B cell (primary cell): ENCODE measurements at regions of chr2 and their contacts with region 1.

Region 1: GRCh38 chr2:201182650-201183364 is at the start of gene CASP10:
- DNase-seq: peak; percentile 85
- ATAC-seq: peak; percentile 84
- H3K4me3 ChIP-seq: peak within 1 kb of the TSS; percentile 64 to 96 (median 79)
- H3K4me3 Mint-ChIP-seq: peak within 1 kb of the TSS; percentile 96
- H3K27ac ChIP-seq: peak within 1 kb of the TSS; percentile 33 to 71
- H3K27ac Mint-ChIP-seq: peak within 1 kb of the TSS; percentile 86
- H3K4me1 ChIP-seq: peaks cover 30 to 37% of the 10 kb centered on the region in 2 donors
- H3K4me1 Mint-ChIP-seq: peaks cover 46% of the 10 kb centered on the region
- H3K27me3 ChIP-seq: no peaks in the 10 kb centered on the region
- H3K27me3 Mint-ChIP-seq: no peaks in the 10 kb centered on the region
- CTCF ChIP-seq: peak; percentile 71
- total RNA-seq, gene CASP10: 33.7 and 34.3 TPM in 2 replicates

Region 2: DNA sequence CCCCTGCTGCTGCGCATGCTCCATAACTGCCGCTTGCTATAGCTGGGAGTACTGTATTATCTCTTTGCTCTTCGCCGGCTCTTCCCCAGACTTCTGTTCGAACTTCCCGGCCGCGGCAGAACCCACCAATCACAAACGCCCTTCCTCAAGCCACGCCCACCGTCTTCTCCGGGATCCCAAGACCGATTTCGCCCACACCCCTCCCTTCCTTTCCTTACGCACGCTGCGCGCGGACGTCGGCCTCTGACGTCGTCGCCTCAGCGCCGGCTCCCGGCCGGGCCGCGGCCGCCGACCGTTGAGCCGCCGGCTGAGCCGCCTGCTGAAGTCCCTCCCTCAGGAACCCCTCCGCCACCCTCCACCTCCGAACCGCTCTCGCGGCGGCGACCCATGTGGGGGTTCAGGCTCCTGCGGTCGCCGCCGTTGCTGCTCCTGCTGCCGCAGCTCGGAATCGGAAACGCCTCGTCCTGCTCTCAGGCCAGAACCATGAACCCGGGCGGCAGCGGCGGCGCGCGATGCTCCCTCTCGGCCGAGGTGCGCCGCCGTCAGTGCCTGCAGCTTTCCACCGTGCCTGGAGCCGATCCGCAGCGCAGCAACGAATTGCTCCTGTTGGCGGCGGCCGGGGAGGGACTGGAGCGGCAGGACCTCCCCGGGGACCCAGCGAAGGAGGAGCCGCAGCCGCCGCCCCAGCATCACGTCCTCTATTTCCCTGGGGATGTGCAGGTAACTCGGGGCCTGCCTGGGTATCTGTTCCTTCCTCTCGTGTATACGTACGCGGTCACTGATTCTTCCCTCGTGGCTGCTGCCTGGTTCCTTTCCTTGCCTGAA is 1271.5 kb before region 1 on chr2 and contains the start of gene C2orf69:
- CTCF ChIA-PET with region 1: no interaction called
- POLR2A ChIA-PET with region 1: no interaction called
- intact Hi-C with region 1: loop called (anchors 5 kb)
- DNase-seq: peak; percentile 96
- ATAC-seq: peak; percentile 86
- H3K4me3 ChIP-seq: peak within 1 kb of the TSS; percentile 71 to 98 (median 87)
- H3K4me3 Mint-ChIP-seq: peak within 1 kb of the TSS; percentile 89
- H3K27ac ChIP-seq: peak within 1 kb of the TSS; percentile 97 to 98
- H3K27ac Mint-ChIP-seq: peak within 1 kb of the TSS; percentile 87
- H3K4me1 ChIP-seq: peaks cover 12 to 26% of the 10 kb centered on the region in 2 donors
- H3K4me1 Mint-ChIP-seq: peaks cover 43% of the 10 kb centered on the region
- H3K27me3 ChIP-seq: no peaks in the 10 kb centered on the region
- H3K27me3 Mint-ChIP-seq: no peaks in the 10 kb centered on the region
- CTCF ChIP-seq: no peak
- total RNA-seq, gene C2orf69: 12.8 and 12.9 TPM in 2 replicates

Region 3: DNA sequence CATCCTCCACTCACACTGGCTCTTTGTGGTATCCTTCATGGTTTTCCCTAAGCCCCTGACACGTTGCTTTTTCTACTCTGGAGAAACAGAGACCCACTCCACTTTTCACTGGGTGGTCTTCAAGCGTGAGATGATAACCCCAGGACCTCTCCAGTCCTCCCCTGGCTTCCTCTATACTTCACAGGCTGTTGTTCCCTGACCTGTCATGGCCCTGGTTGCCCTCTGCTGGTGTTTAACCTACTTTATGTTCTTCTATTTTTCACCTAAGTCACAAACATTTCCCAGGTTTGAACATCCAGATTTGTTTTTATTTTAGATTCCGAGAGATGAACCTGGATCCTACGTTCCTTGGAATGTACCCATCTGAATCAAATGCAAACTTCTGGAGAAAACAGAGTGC is 512.5 kb before region 1 on chr2:
- CTCF ChIA-PET with region 1: no interaction called
- POLR2A ChIA-PET with region 1: no interaction called
- intact Hi-C with region 1: no loop called
- DNase-seq: no peak
- ATAC-seq: no peak
- H3K4me3 ChIP-seq: no peak overlapping the region
- H3K4me3 Mint-ChIP-seq: no peak overlapping the region
- H3K27ac ChIP-seq: no peak overlapping the region
- H3K27ac Mint-ChIP-seq: no peak overlapping the region
- H3K4me1 ChIP-seq: no peaks in the 10 kb centered on the region
- H3K4me1 Mint-ChIP-seq: peaks cover 5% of the 10 kb centered on the region
- H3K27me3 ChIP-seq: peaks cover 0 to 6% (median 3%) of the 10 kb centered on the region in 4 experiments
- H3K27me3 Mint-ChIP-seq: peaks cover 39% of the 10 kb centered on the region
- CTCF ChIP-seq: no peak

Region 4: GRCh38 chr2:200820573-200821234 is 362.1 kb before region 1 on chr2:
- CTCF ChIA-PET with region 1: no interaction called
- POLR2A ChIA-PET with region 1: no interaction called
- intact Hi-C with region 1: no loop called
- DNase-seq: no peak
- ATAC-seq: no peak
- H3K4me3 ChIP-seq: no peak overlapping the region
- H3K4me3 Mint-ChIP-seq: no peak overlapping the region
- H3K27ac ChIP-seq: no peak overlapping the region
- H3K27ac Mint-ChIP-seq: no peak overlapping the region
- H3K4me1 ChIP-seq: no peaks in the 10 kb centered on the region
- H3K4me1 Mint-ChIP-seq: peaks cover 2% of the 10 kb centered on the region
- H3K27me3 ChIP-seq: no peaks in the 10 kb centered on the region
- H3K27me3 Mint-ChIP-seq: no peaks in the 10 kb centered on the region
- CTCF ChIP-seq: no peak

Region 5: GRCh38 chr2:200963124-200963917 is 219.5 kb before region 1 on chr2 and contains the start of gene ORC2:
- CTCF ChIA-PET with region 1: interaction called, 19 read pairs
- POLR2A ChIA-PET with region 1: interaction called, 3 read pairs
- intact Hi-C with region 1: no loop called
- DNase-seq: peak; percentile 97
- ATAC-seq: peak; percentile 92
- H3K4me3 ChIP-seq: peak within 1 kb of the TSS; percentile 77 to 97 (median 90)
- H3K4me3 Mint-ChIP-seq: peak within 1 kb of the TSS; percentile 92
- H3K27ac ChIP-seq: peak within 1 kb of the TSS; percentile 90 to 92
- H3K27ac Mint-ChIP-seq: peak within 1 kb of the TSS; percentile 98
- H3K4me1 ChIP-seq: peaks cover 28 to 30% of the 10 kb centered on the region in 2 donors
- H3K4me1 Mint-ChIP-seq: peaks cover 53% of the 10 kb centered on the region
- H3K27me3 ChIP-seq: no peaks in the 10 kb centered on the region
- H3K27me3 Mint-ChIP-seq: no peaks in the 10 kb centered on the region
- CTCF ChIP-seq: peak; percentile 77
- total RNA-seq, gene ORC2: 50.6 and 63.6 TPM in 2 replicates

Region 6: GRCh38 chr2:201171259-201171814 is 11.5 kb before region 1 on chr2:
- CTCF ChIA-PET with region 1: interaction called, 16 read pairs
- POLR2A ChIA-PET with region 1: interaction called, 4 read pairs
- intact Hi-C with region 1: no loop called
- DNase-seq: no peak
- ATAC-seq: no peak
- H3K4me3 ChIP-seq: no peak overlapping the region
- H3K4me3 Mint-ChIP-seq: no peak overlapping the region
- H3K27ac ChIP-seq: no peak overlapping the region
- H3K27ac Mint-ChIP-seq: no peak overlapping the region
- H3K4me1 ChIP-seq: peaks cover 12 to 20% of the 10 kb centered on the region in 2 donors
- H3K4me1 Mint-ChIP-seq: peaks cover 27% of the 10 kb centered on the region
- H3K27me3 ChIP-seq: no peaks in the 10 kb centered on the region
- H3K27me3 Mint-ChIP-seq: no peaks in the 10 kb centered on the region
- CTCF ChIP-seq: no peak

Region 7: GRCh38 chr2:201208563-201209252 is 25.9 kb after region 1 on chr2:
- CTCF ChIA-PET with region 1: interaction called, 19 read pairs
- POLR2A ChIA-PET with region 1: interaction called, 4 read pairs
- intact Hi-C with region 1: loop called (anchors 1 kb)
- DNase-seq: peak; percentile 90
- ATAC-seq: peak; percentile 85
- H3K4me3 ChIP-seq: peak overlapping the region in 3 of 5 experiments; percentile 8 to 40 (median 31)
- H3K4me3 Mint-ChIP-seq: peak overlapping the region; percentile 68
- H3K27ac ChIP-seq: peak overlapping the region; percentile 60 to 76
- H3K27ac Mint-ChIP-seq: peak overlapping the region; percentile 94
- H3K4me1 ChIP-seq: peaks cover 34 to 42% of the 10 kb centered on the region in 2 donors
- H3K4me1 Mint-ChIP-seq: peaks cover 58% of the 10 kb centered on the region
- H3K27me3 ChIP-seq: no peaks in the 10 kb centered on the region
- H3K27me3 Mint-ChIP-seq: no peaks in the 10 kb centered on the region
- CTCF ChIP-seq: no peak

Region 8: DNA sequence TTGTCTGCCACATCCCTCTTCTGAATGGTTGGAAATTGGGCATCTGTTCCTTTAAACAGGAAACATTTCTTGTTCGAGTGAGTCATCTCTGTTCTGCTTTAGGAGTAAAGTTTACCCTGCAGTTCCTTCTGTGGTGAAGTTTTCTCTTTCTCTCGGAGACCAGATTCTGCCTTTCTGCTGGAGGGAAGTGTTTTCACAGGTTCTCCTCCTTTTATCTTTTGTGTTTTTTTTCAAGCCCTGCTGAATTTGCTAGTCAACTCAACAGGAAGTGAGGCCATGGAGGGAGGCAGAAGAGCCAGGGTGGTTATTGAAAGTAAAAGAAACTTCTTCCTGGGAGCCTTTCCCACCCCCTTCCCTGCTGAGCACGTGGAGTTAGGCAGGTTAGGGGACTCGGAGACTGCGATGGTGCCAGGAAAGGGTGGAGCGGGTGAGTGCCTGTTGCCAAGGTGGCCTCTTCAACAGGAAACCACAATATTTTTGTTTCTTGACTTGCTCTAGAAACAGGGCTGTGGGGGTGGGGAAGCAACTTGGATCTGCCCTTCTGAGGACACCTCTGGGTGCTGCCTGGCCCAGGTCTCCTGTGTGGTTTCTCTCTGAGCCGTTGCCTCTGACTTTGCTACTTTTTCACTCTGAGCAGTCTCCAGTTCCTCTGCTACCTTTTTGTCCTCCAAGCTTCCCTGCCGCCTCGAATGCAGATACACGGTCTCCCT is 75.3 kb after region 1 on chr2:
- CTCF ChIA-PET with region 1: interaction called, 21 read pairs
- POLR2A ChIA-PET with region 1: interaction called, 5 read pairs
- intact Hi-C with region 1: loop called (anchors 1 kb)
- DNase-seq: peak; percentile 94
- ATAC-seq: peak; percentile 67
- H3K4me3 ChIP-seq: peak overlapping the region; percentile 39 to 90 (median 58)
- H3K4me3 Mint-ChIP-seq: peak overlapping the region; percentile 87
- H3K27ac ChIP-seq: peak overlapping the region; percentile 97 to 98
- H3K27ac Mint-ChIP-seq: peak overlapping the region; percentile 99
- H3K4me1 ChIP-seq: peaks cover 58 to 84% of the 10 kb centered on the region in 2 donors
- H3K4me1 Mint-ChIP-seq: peaks cover 73% of the 10 kb centered on the region
- H3K27me3 ChIP-seq: no peaks in the 10 kb centered on the region
- H3K27me3 Mint-ChIP-seq: no peaks in the 10 kb centered on the region
- CTCF ChIP-seq: no peak